ENCODE measurements at regions of chr22 and their contacts with region 1.

Region 1: DNA sequence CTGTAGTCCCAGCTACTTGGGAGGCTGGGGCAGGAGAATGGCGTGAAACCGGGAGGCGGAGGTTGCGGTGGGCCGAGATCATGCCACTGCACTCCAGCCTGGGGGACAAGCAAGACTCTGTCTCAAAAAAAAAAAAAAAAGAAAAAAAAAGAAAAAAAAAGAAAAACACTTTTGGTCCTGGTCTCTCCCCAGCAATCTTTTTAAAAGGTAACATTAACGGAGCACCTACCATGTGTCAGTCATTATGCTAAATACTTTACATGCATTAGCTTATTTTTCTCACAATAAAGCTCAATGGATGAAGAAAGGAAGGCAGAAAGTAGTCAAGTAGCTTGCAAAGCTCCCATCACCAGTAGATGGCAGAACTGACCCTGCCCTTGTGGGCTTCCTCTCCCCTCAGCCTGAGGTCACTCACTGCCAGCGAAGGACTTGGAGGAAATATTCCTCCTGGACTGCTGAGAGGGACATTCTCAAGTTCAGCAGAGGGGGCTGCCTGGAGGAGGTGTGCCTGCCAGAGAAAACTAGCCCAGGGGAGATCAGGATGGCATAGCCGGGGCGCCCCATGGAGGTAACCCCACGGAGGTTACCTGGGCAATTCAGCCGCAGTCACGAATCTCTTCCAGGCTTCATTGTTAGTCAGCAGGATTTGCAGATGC is 15.5 kb downstream of the APOL3 start:
- DNase-seq: peak; percentile 68 to 80 (median 79)
- ATAC-seq: peak; percentile 83 to 85
- H3K4me3 ChIP-seq: no peak overlapping the region
- H3K27ac ChIP-seq: no peak overlapping the region
- H3K4me1 ChIP-seq: peaks cover 8% of the 10 kb centered on the region
- H3K27me3 ChIP-seq: no peaks in the 10 kb centered on the region

Region 2: GRCh38 chr22:36052505-36053270 is 92.3 kb before region 1 on chr22:
- intact Hi-C with region 1: no loop called
- DNase-seq: no peak
- ATAC-seq: peak in 1 of 2 donors; percentile 40
- H3K4me3 ChIP-seq: no peak overlapping the region
- H3K27ac ChIP-seq: no peak overlapping the region
- H3K4me1 ChIP-seq: no peaks in the 10 kb centered on the region
- H3K27me3 ChIP-seq: no peaks in the 10 kb centered on the region

Region 3: DNA sequence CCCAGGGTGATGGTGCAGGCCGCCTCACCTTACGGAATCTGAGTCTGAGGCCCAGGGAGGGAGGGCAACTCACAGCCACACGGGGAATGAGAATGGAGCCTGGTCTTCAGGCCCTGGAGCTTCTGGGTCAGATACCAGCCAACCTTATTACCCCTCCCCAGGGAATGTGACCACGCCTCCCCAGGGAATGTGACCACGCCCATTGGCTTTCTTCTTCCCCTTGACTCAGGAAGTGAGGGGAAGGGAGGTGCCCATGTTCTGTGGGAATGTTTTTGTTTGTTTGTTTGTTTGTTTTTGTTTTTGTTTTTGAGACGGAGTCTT is 58.9 kb before region 1 on chr22:
- intact Hi-C with region 1: no loop called
- DNase-seq: no peak
- ATAC-seq: no peak
- H3K4me3 ChIP-seq: no peak overlapping the region
- H3K27ac ChIP-seq: no peak overlapping the region
- H3K4me1 ChIP-seq: no peaks in the 10 kb centered on the region
- H3K27me3 ChIP-seq: no peaks in the 10 kb centered on the region

Region 4: DNA sequence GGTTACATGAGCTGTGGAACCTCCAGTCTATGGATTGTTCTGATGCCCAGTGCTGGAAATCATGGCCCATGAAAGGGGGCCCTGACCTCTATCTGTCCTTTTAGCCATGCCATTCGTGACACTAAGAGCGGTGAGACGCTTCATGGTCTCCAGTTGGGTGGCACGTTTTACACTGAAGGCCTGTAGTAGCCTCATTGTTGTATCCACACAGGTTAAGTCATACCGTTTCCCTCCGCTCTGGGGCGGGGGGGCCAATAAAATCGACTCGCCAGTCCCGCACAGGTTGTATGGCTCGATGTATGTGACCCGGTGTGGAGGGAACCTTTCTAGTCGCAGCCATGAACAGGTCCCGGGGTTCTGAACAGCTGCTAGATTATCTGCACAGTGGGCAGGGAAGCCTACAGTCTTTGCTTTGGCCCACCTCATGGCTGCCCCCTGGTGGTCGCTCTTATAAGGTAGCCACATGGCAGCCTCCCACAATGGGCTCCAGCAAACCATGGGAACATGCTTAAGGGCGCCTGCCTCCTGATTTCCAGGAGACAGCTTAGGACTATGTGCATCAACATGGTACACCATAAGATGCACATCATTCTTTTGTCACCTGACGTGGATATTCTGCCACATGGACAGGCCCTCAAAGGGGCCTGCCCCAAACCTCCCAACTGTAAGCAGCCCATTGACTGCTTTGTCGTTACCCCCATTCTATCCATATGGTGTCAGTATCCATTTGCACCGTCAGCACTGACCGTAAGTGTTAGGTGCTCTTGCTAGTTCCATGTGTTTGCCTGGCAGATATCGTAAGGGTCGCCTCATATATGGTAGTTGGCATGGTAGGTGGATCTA is 35.2 kb after region 1 on chr22:
- intact Hi-C with region 1: loop called in 3 of 4 experiments (anchors 5 kb)
- DNase-seq: peak; percentile 87 to 97 (median 92)
- ATAC-seq: peak; percentile 88 to 90
- H3K4me3 ChIP-seq: no peak overlapping the region
- H3K27ac ChIP-seq: no peak overlapping the region
- H3K4me1 ChIP-seq: peaks cover 7% of the 10 kb centered on the region
- H3K27me3 ChIP-seq: no peaks in the 10 kb centered on the region

Region 5: GRCh38 chr22:36277482-36278291 is 132.7 kb after region 1 on chr22:
- intact Hi-C with region 1: loop called in 2 of 4 experiments (anchors 10 kb)
- DNase-seq: peak; percentile 60 to 82 (median 81)
- ATAC-seq: peak; percentile 60 to 70
- H3K4me3 ChIP-seq: no peak overlapping the region
- H3K27ac ChIP-seq: no peak overlapping the region
- H3K4me1 ChIP-seq: no peaks in the 10 kb centered on the region
- H3K27me3 ChIP-seq: no peaks in the 10 kb centered on the region

Region 6: DNA sequence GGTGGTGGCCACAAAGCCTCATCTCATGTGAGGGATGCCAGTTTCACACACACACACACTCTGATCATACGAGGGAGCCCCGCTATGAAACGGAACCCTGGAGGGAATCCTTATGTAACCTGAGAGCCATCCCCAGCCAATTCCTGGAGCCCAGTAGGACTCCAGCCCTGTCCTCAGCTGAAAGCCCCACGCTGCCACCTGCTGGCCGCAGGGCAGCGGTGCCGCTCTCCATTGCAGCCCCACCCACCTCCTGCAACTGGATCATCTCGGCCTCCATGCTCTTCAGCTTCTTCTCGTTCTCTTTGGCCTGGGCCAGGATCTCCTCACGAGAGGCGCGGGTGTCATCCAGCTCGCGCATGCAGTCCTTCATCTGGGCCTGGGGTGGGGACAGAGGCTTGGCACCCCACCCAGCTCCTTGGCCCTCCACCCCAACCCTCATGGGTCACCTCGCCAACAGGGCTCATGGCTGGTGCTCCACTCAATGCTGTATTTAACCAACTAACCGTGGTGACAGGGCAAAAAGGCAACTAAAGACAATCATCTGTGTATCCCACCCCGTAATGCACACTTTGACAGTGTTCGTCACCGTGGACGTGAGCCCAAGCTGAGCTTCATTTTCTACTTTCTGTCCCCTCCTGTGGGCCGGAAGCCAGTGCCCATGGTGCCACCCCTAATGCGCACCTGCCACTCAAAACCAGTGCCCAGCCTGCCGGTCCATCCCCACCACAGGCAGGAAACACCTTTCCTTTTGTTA is 141.6 kb after region 1 on chr22:
- intact Hi-C with region 1: loop called in 1 of 4 experiments (anchors 10 kb)
- DNase-seq: peak; percentile 74 to 93 (median 91)
- ATAC-seq: peak; percentile 73 to 86
- H3K4me3 ChIP-seq: no peak overlapping the region
- H3K27ac ChIP-seq: peak overlapping the region; percentile 2
- H3K4me1 ChIP-seq: no peaks in the 10 kb centered on the region
- H3K27me3 ChIP-seq: no peaks in the 10 kb centered on the region

Measured in right cardiac atrium (tissue), 5 donors.